Cardiac septum (tissue), 1 donor: ENCODE measurements at regions of chr6 and their contacts with region 1.

Region 1: GRCh38 chr6:116531675-116532570 is 13.6 kb downstream of the TRAPPC3L start:
- DNase-seq: no peak

Region 2: DNA sequence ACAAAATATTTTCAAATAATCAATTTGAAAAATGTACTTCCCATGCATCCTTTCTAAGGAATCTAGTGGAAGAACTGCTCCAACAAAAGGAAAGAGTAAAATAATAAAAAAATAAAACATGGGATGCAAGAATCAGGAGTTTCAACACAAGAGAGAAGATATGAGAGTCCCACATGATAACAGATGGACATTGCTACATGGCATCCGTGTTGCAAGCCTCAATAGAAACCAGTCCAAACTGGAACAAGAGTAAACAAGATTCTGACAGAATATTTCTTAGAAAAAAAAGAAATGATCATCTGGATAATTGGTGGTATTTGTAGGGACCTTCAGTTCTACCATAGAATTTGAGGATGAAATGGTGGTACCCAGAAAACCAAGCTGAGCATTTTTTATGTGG is 658.0 kb before region 1 on chr6:
- intact Hi-C with region 1: no loop called
- DNase-seq: no peak

Region 3: GRCh38 chr6:116217069-116217468 is 314.9 kb before region 1 on chr6:
- intact Hi-C with region 1: loop called (anchors 10 kb)
- DNase-seq: no peak

Region 4: GRCh38 chr6:116271309-116271708 is 260.6 kb before region 1 on chr6:
- intact Hi-C with region 1: loop called (anchors 1 kb)
- DNase-seq: no peak

Region 5: GRCh38 chr6:116287689-116288282 is 244.1 kb before region 1 on chr6:
- intact Hi-C with region 1: loop called (anchors 2 kb)
- DNase-seq: no peak

Region 6: GRCh38 chr6:116444092-116444491 is 87.8 kb before region 1 on chr6:
- intact Hi-C with region 1: loop called (anchors 10 kb)
- DNase-seq: no peak

Region 7: DNA sequence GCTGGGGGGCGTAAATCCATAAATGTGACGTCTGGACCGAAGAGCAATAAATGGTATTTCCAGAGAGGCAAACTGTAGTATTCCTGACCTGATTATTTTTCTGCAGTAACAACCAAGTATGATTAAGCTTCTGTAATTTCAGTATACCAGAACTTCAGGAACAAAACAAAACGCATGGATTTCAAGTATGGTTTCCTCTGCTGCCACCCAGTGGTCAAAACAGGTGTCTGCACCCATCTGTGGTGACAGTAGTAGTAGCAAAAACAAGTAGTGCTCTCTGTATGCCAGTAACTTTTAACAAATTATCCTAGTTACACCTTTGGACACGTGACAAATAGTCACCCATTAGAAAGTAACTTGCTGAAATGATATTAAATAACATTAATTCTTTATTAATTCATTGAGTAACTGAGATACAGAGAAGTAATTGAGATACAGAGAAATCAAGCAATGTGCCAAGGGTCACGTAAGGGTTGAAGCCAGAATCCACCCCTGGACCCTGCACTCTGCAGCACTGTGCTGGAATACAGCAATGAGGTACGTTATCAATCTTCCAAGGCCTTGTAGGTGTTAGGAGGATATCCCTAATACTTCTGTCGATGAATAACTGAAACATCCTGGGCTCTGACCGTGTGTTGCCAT is 29.6 kb after region 1 on chr6:
- intact Hi-C with region 1: loop called (anchors 2 kb)
- DNase-seq: no peak

Region 8: DNA sequence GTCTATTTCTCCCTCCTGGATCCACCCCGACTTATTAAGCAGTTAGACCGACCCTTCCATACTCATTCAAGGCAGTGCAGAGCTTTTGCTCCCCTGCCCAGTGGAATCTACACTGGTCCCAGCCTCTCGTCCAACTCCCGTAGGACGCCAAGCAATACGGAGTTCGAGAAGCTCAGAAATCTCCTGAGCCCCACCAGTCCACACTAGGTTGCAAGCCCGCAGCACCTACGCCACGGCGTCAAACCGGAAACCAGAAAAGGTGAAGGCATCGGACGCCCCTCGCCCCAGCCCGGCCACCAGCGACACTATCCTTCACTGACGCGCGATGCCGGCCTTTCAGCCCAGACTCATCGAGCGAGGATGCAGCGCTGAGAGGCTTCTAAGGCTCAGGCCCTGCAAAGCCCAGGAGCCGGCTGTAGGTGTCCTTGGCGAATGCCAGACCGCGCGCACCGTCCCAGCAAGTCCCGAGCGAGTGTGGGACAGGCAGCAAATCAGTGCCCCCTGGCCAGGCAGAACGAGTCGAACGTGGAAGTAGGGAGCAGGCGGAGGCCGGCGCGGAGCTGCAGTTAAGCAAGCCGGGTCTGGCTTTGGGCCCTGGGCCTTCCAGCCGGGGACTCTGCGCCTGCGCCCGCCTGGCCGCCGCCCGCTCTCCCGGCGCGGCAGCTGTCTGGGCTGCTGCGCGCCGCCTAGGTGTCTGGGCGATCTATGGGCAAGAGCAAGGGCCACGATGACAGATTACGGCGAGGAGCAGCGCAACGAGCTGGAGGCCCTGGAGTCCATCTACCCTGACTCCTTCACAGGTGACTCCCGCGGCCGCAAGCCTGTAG is 39.1 kb after region 1 on chr6 and contains the start of gene RWDD1:
- intact Hi-C with region 1: loop called (anchors 5 kb)
- DNase-seq: peak; percentile 100
- total RNA-seq, gene RWDD1: 52.9 TPM